CD14-positive monocyte (primary cell): ENCODE measurements at regions of chr4 and their contacts with region 1.

Region 1: DNA sequence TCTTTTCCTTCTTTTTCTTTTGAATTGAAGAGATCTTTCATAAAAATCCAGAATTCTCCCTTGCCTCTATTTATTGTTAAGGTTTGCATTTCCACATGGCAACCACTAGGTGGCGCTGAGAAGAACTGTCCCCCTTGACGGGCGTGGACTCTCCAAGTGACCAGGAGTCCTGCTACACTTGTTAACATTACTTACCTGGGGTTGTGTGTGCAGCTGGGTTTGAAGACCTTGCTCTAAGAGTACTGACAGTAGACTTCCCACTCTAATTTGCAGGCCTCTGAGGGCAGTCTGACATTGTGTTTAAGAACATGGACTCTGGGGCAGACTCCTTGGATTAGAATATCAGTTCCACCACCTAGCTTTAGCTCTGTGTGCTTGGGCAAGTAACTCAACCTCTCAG is 52.8 kb downstream of the GPRIN3 start:
- DNase-seq: peak; percentile 30 to 59 (median 59)
- H3K4me3 ChIP-seq: no peak overlapping the region
- H3K4me3 Mint-ChIP-seq: no peak overlapping the region
- H3K27ac ChIP-seq: no peak overlapping the region
- H3K27ac Mint-ChIP-seq: peak overlapping the region in 3 of 7 donors; percentile 11 to 69 (median 50)
- H3K4me1 ChIP-seq: no peaks in the 10 kb centered on the region
- H3K4me1 Mint-ChIP-seq: peaks cover 3% of the 10 kb centered on the region
- H3K27me3 ChIP-seq: no peaks in the 10 kb centered on the region
- H3K27me3 Mint-ChIP-seq: peaks cover 0 to 4% (median 3%) of the 10 kb centered on the region in 3 donors
- CTCF ChIP-seq: peak; percentile 95

Region 2: DNA sequence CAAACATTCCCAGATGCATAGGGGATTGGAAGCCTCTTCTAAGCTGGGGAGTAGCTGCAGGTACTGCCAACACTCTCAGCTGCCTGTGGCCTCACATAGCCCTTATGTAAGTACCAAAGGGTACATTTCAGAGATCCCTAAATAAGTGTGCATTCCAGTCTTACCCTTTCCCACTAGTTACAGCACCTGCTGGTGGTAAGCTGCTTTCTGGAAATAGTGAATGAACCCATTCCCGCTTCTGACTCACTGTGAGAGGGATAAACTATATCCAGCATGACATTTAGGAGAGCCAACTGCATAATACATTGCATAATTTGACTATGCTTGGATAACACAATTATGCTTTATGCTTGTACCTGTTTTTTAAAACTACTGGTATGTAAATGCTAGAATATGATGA is 346.8 kb before region 1 on chr4:
- intact Hi-C with region 1: no loop called
- DNase-seq: no peak
- H3K4me3 ChIP-seq: no peak overlapping the region
- H3K4me3 Mint-ChIP-seq: no peak overlapping the region
- H3K27ac ChIP-seq: no peak overlapping the region
- H3K27ac Mint-ChIP-seq: no peak overlapping the region
- H3K4me1 ChIP-seq: peaks cover 8 to 12% of the 10 kb centered on the region in 2 donors
- H3K4me1 Mint-ChIP-seq: peaks cover 12% of the 10 kb centered on the region
- H3K27me3 ChIP-seq: no peaks in the 10 kb centered on the region
- H3K27me3 Mint-ChIP-seq: no peaks in the 10 kb centered on the region
- CTCF ChIP-seq: no peak

Region 3: GRCh38 chr4:89294573-89295269 is 39.9 kb after region 1 on chr4:
- intact Hi-C with region 1: no loop called
- DNase-seq: peak in 2 of 3 donors; percentile 40 to 54
- H3K4me3 ChIP-seq: no peak overlapping the region
- H3K4me3 Mint-ChIP-seq: no peak overlapping the region
- H3K27ac ChIP-seq: peak overlapping the region in 1 of 2 donors; percentile 6
- H3K27ac Mint-ChIP-seq: peak overlapping the region in 4 of 7 donors; percentile 12 to 86 (median 41)
- H3K4me1 ChIP-seq: peaks cover 38 to 60% of the 10 kb centered on the region in 2 donors
- H3K4me1 Mint-ChIP-seq: peaks cover 52% of the 10 kb centered on the region
- H3K27me3 ChIP-seq: no peaks in the 10 kb centered on the region
- H3K27me3 Mint-ChIP-seq: peaks cover 0 to 5% (median 4%) of the 10 kb centered on the region in 3 donors
- CTCF ChIP-seq: no peak

Region 4: DNA sequence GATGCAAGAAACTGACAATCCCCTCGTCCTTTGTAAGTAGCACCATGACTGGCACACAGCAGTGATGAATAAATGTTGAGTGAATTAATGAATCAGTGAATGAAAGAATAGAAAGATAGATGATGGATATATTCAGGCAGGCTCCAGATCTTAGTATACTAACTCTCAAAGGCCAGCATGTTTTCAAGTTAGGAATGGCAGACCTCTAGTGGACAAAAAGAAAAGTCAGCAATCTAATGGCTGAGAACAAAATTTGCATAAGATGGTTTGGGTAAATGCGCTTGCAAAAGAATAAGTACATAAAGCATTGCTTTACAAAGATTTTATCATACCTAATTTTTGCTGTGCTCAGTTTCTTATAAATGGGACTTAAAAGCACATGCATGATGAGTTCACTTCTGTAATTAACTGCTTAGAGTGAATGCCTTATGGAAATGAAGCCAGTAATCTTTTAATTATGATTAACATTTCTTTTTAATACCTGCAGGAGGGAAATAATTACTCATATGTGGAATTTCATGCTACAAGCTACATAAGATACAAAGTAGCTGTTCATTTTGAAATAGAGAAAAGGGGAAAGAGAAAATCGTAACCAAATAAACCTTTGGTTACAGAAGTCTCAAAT is 179.6 kb after region 1 on chr4:
- intact Hi-C with region 1: loop called (anchors 2 to 10 kb)
- DNase-seq: peak; percentile 7 to 39 (median 29)
- H3K4me3 ChIP-seq: no peak overlapping the region
- H3K4me3 Mint-ChIP-seq: no peak overlapping the region
- H3K27ac ChIP-seq: no peak overlapping the region
- H3K27ac Mint-ChIP-seq: no peak overlapping the region
- H3K4me1 ChIP-seq: peaks cover 0 to 8% of the 10 kb centered on the region in 2 donors
- H3K4me1 Mint-ChIP-seq: peaks cover 13% of the 10 kb centered on the region
- H3K27me3 ChIP-seq: no peaks in the 10 kb centered on the region
- H3K27me3 Mint-ChIP-seq: peaks cover 0 to 2% (median 0%) of the 10 kb centered on the region in 3 donors
- CTCF ChIP-seq: peak; percentile 80